Activated CD4-positive, alpha-beta T cell treated with anti-CD3 and anti-CD28 coated beads, Interleukin-2, amount 10 ng/mL, durations not matched to agents 7 days and 5 days (primary cell): ENCODE measurements at regions of chr20 and their contacts with region 1.

Region 1: GRCh38 chr20:44028868-44029847 is 114.5 kb downstream of the TOX2 start:
- DNase-seq: no peak
- H3K4me3 Mint-ChIP-seq: no peak overlapping the region
- H3K27ac Mint-ChIP-seq: no peak overlapping the region
- H3K4me1 Mint-ChIP-seq: peaks cover 33% of the 10 kb centered on the region
- H3K27me3 Mint-ChIP-seq: peaks cover 41% of the 10 kb centered on the region

Region 2: DNA sequence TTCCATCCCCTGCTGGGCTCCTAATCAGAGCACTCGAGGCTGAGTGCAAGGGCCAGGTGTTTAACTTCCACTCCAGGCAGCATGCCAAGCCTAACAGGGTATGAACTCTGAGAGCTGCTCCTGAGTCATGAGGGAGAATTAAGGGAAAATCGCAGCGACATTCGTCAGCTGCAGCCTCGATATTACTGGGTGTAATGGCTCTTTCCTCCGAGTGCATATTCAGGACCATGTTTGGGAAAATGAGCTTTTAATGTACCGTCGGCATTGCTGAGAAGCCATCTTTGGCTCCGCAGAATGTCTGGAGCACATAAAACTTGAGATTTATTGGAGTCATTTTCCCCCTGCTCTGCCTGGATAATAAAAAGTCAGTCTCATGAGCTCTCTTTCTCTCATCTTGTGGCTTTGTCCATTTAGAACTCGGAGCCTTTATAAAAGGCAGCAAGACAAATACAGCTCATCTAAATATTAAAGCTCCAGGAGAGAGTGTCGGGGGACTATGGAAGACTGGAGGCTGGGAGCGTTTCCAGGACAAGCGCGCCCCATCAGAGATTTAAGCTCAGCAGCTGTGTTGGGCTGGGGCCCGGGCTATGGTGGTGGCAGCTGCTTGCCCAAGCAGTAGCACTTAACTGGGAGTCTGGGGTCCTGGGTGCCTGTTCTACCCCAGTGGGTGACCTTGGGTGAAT is 10.8 kb before region 1 on chr20:
- CTCF ChIA-PET with region 1: interaction called, 12 read pairs
- POLR2A ChIA-PET with region 1: no interaction called
- DNase-seq: no peak
- H3K4me3 Mint-ChIP-seq: no peak overlapping the region
- H3K27ac Mint-ChIP-seq: no peak overlapping the region
- H3K4me1 Mint-ChIP-seq: peaks cover 34% of the 10 kb centered on the region
- H3K27me3 Mint-ChIP-seq: peaks cover 55% of the 10 kb centered on the region